Caco-2 (cell line): ENCODE measurements at regions of chr7 and their contacts with region 1.

Region 1: GRCh38 chr7:122706836-122707235 is 4.1 kb upstream of the RNF148 start:
- DNase-seq: no peak
- H3K4me3 ChIP-seq: no peak overlapping the region
- H3K4me3 Mint-ChIP-seq: no peak overlapping the region
- H3K27ac Mint-ChIP-seq: no peak overlapping the region
- H3K4me1 ChIP-seq: no peaks in the 10 kb centered on the region
- H3K4me1 Mint-ChIP-seq: no peaks in the 10 kb centered on the region
- H3K27me3 ChIP-seq: no peaks in the 10 kb centered on the region
- H3K27me3 Mint-ChIP-seq: no peaks in the 10 kb centered on the region
- CTCF ChIP-seq: no peak

Region 2: GRCh38 chr7:122651451-122651850 is 55.4 kb before region 1 on chr7:
- CTCF ChIA-PET with region 1: no interaction called
- POLR2A ChIA-PET with region 1: no interaction called
- intact Hi-C with region 1: loop called (anchors 2 kb)
- DNase-seq: no peak
- H3K4me3 ChIP-seq: no peak overlapping the region
- H3K4me3 Mint-ChIP-seq: no peak overlapping the region
- H3K27ac Mint-ChIP-seq: no peak overlapping the region
- H3K4me1 ChIP-seq: peaks cover 10% of the 10 kb centered on the region
- H3K4me1 Mint-ChIP-seq: peaks cover 18% of the 10 kb centered on the region
- H3K27me3 ChIP-seq: no peaks in the 10 kb centered on the region
- H3K27me3 Mint-ChIP-seq: no peaks in the 10 kb centered on the region
- CTCF ChIP-seq: no peak